Activated CD4-positive, alpha-beta T cell treated with anti-CD3 and anti-CD28 coated beads for 36 hours (primary cell): ENCODE measurements at regions of chr14 and their contacts with region 1.

Region 1: GRCh38 chr14:91244501-91244901 is at the start of gene GPR68:
- DNase-seq: no peak
- ATAC-seq: no peak
- H3K4me3 Mint-ChIP-seq: peak within 1 kb of the TSS; percentile 74
- H3K27ac Mint-ChIP-seq: peak within 1 kb of the TSS; percentile 89
- H3K4me1 Mint-ChIP-seq: peaks cover 95% of the 10 kb centered on the region
- H3K27me3 Mint-ChIP-seq: no peaks in the 10 kb centered on the region
- total RNA-seq, gene GPR68: 9.4 to 11.2 TPM

Region 2: DNA sequence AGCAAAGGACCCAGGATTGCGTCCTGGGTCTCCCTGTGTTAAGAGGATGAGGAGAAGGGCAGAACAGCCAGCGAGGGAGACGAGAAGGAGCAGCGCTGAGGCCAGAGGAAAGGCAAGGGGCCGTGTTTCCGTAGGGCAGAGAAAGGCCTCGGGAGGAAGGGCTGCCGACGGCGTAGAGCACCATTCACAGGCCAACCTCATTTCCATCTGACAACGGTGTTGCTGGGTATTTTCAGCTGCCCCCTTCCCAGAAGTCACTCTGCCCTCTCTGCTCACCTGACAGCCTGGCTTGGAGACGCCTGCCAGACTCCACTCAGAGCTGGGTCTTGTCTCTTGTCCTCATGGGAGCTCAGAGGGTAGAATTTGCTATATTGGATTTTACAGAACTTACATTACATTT is 51.4 kb before region 1 on chr14:
- CTCF ChIA-PET with region 1: interaction called, 5 read pairs
- POLR2A ChIA-PET with region 1: interaction called, 11 read pairs
- intact Hi-C with region 1: loop called in 1 of 2 experiments (anchors 1 kb)
- DNase-seq: no peak
- ATAC-seq: no peak
- H3K4me3 Mint-ChIP-seq: no peak overlapping the region
- H3K27ac Mint-ChIP-seq: peak overlapping the region; percentile 49
- H3K4me1 Mint-ChIP-seq: peaks cover 22% of the 10 kb centered on the region
- H3K27me3 Mint-ChIP-seq: no peaks in the 10 kb centered on the region

Region 3: DNA sequence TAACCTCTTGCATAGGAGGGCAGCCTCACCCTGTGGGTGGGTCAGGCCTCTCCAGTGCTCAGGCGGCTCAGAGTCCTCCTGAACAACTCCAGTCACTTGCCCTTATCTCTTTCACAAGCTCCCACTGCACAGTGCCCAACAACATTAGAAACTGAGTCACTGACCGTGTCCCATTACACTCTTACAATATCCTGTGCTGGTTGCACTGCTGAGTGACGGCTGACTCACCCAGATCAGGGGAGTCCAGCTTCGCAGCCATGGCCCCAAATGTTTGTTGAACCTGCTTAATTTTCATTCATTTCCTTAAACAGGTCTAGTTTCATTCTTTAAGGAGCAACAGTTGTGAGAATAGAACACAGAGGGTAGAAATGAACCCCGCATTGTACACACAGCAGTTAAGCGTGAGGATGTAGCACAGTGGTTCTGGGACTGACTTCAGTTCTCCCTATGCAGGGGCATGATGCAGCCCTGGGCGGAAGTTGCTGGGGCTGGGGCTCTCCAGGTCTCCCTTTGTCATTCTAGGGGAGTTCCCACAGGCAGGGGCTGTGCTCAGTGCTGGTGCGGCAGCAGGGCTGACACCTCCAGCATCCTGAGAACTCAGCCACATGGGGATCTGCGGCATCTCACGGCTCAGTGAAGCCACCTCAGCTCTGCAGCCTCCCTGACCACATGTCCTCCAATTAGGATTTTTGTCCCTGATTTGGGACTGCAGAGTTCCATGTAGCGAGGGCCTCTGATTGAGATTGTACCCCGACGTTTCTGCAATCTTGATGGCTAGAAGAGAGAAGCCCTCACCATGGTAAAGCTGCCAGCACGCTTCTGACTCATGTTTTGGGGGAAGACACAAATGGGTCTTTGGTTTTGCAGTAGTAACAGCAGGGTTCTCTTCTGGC is 16.1 kb before region 1 on chr14:
- CTCF ChIA-PET with region 1: interaction called, 26 read pairs
- POLR2A ChIA-PET with region 1: interaction called, 66 read pairs
- intact Hi-C with region 1: loop called (anchors 1 kb)
- DNase-seq: peak; percentile 95
- ATAC-seq: peak; percentile 87
- H3K4me3 Mint-ChIP-seq: peak overlapping the region; percentile 67
- H3K27ac Mint-ChIP-seq: peak overlapping the region; percentile 100
- H3K4me1 Mint-ChIP-seq: peaks cover 95% of the 10 kb centered on the region
- H3K27me3 Mint-ChIP-seq: no peaks in the 10 kb centered on the region

Region 4: GRCh38 chr14:91257328-91258010 is 13.0 kb after region 1 on chr14:
- CTCF ChIA-PET with region 1: interaction called, 8 read pairs
- POLR2A ChIA-PET with region 1: interaction called, 7 read pairs
- intact Hi-C with region 1: loop called in 1 of 2 experiments (anchors 2 kb)
- DNase-seq: no peak
- ATAC-seq: peak; percentile 59
- H3K4me3 Mint-ChIP-seq: no peak overlapping the region
- H3K27ac Mint-ChIP-seq: peak overlapping the region; percentile 77
- H3K4me1 Mint-ChIP-seq: peaks cover 59% of the 10 kb centered on the region
- H3K27me3 Mint-ChIP-seq: no peaks in the 10 kb centered on the region

Region 5: GRCh38 chr14:91286530-91286937 is 42.0 kb after region 1 on chr14:
- CTCF ChIA-PET with region 1: interaction called, 11 read pairs
- POLR2A ChIA-PET with region 1: no interaction called
- intact Hi-C with region 1: no loop called
- DNase-seq: peak; percentile 89
- ATAC-seq: peak; percentile 84
- H3K4me3 Mint-ChIP-seq: no peak overlapping the region
- H3K27ac Mint-ChIP-seq: peak overlapping the region; percentile 78
- H3K4me1 Mint-ChIP-seq: peaks cover 13% of the 10 kb centered on the region
- H3K27me3 Mint-ChIP-seq: no peaks in the 10 kb centered on the region

Region 6: GRCh38 chr14:91303091-91303923 is 58.8 kb after region 1 on chr14:
- CTCF ChIA-PET with region 1: no interaction called
- POLR2A ChIA-PET with region 1: no interaction called
- intact Hi-C with region 1: loop called (anchors 1 to 2 kb)
- DNase-seq: peak; percentile 97
- ATAC-seq: peak; percentile 87
- H3K4me3 Mint-ChIP-seq: peak overlapping the region; percentile 66
- H3K27ac Mint-ChIP-seq: peak overlapping the region; percentile 97
- H3K4me1 Mint-ChIP-seq: peaks cover 63% of the 10 kb centered on the region
- H3K27me3 Mint-ChIP-seq: no peaks in the 10 kb centered on the region